Endothelial cell of umbilical vein (primary cell): ENCODE measurements at regions of chr11 and their contacts with region 1.

Region 1: DNA sequence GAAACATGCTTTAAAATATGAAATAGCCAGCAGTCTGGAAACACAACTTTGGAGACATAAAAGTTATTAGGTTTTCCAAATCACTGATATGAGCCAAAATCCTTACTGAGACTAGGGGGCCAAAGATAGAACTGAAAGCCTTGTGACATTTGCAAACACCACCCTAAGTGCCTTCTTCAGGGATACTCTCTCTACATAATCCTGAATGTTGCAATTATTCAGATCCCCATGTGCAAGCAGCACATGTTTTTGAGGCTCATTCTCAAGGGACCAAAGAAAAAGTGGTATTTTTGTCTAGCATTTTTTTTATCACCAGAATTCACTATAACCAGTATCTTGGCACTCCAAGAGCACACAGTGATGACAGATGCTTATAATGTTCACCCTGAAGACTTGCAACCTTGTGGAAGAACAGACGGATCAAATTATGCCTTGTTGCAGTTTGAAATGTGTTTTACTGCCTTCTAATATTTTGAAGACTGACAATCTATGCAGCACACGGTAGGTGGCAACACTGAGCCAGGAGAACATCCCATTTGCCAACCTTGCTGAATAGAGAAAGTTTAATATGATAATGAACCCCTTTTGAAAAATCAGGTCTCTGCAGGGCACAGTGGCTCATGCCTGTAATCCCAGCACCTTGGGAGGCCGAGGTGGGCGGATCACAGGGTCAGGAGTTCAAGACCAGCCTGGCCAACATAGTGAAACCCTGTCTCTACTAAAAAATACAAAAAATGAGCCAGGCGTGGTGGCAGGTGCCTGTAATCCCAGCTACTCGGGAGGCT is 78.5 kb downstream of the PLEKHA7 start:
- DNase-seq: peak; percentile 41
- H3K4me3 ChIP-seq: no peak overlapping the region
- H3K27ac ChIP-seq: no peak overlapping the region
- H3K4me1 ChIP-seq: no peaks in the 10 kb centered on the region
- H3K27me3 ChIP-seq: peaks cover 0 to 2% of the 10 kb centered on the region in 2 experiments
- CTCF ChIP-seq: peak; percentile 57 to 72
- POLR2A ChIP-seq: no peak

Region 2: GRCh38 chr11:16945671-16946469 is 10.2 kb after region 1 on chr11:
- CTCF ChIA-PET with region 1: interaction called, 11 read pairs
- POLR2A ChIA-PET with region 1: no interaction called
- dilution Hi-C with region 1: no loop called
- intact Hi-C with region 1: no loop called
- DNase-seq: peak; percentile 34
- H3K4me3 ChIP-seq: no peak overlapping the region
- H3K27ac ChIP-seq: no peak overlapping the region
- H3K4me1 ChIP-seq: no peaks in the 10 kb centered on the region
- H3K27me3 ChIP-seq: no peaks in the 10 kb centered on the region
- CTCF ChIP-seq: peak; percentile 53 to 67
- POLR2A ChIP-seq: no peak